Panc1 (cell line): ENCODE measurements at regions of chr1 and their contacts with region 1.

Region 1: DNA sequence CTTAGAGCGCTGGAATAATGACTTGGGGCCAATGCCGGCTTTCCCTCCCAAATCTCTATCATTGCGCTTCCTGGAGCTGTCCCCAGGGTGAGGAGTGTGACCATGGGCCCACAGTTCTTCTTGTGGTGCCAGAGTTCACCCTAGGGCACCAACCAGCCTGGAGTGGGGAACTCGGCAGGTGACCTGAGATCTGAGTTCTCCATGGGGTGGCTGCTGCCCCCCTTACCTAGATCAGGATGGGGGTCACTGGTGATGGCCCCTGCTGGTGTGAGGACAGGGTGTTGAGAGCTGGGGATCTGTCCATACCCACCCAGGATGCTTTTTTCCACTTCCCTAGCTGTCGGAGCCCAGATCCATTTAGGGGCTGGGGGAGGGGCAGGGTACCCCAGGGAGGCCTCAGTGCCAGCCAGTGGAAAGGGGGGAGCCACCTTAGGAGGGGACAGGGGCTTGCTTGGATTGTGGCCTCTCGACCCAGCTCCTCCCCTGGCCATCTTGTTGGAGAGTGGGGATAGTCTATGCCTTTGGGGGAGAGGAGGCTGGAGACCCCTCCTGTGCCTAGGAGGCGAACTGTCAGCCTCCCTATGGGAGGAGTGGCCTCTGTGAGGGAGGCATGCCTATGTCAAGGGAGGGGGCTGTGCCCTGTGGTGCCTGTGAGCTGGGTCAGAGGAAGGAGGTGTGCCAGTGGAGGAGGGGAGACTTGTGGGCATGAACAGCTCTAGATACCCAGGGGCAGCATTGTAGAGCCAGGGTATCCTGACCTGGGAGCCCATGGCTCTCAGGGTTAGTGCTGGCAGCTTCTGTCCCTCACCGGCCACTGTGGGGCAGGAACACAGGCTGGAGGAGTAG is 1.7 kb downstream of the FOXO6 start:
- DNase-seq: no peak
- ATAC-seq: no peak
- H3K4me3 ChIP-seq: no peak overlapping the region; a peak in 1 of 4 replicates
- H3K27ac ChIP-seq: no peak overlapping the region
- H3K4me1 ChIP-seq: peaks cover 9% of the 10 kb centered on the region; the same call in 1 of the 2 replicates
- H3K27me3 ChIP-seq: no peaks in the 10 kb centered on the region
- CTCF ChIP-seq: no peak

Region 2: GRCh38 chr1:41313661-41314131 is 49.3 kb before region 1 on chr1:
- CTCF ChIA-PET with region 1: no interaction called
- POLR2A ChIA-PET with region 1: interaction called, 11 read pairs
- in situ Hi-C with region 1: no loop called
- intact Hi-C with region 1: no loop called
- DNase-seq: no peak
- ATAC-seq: no peak
- H3K4me3 ChIP-seq: no peak overlapping the region
- H3K27ac ChIP-seq: no peak overlapping the region
- H3K4me1 ChIP-seq: no peaks in the 10 kb centered on the region
- H3K27me3 ChIP-seq: no peaks in the 10 kb centered on the region; the same call in 1 of the 2 replicates
- CTCF ChIP-seq: peak; percentile 68

Region 3: DNA sequence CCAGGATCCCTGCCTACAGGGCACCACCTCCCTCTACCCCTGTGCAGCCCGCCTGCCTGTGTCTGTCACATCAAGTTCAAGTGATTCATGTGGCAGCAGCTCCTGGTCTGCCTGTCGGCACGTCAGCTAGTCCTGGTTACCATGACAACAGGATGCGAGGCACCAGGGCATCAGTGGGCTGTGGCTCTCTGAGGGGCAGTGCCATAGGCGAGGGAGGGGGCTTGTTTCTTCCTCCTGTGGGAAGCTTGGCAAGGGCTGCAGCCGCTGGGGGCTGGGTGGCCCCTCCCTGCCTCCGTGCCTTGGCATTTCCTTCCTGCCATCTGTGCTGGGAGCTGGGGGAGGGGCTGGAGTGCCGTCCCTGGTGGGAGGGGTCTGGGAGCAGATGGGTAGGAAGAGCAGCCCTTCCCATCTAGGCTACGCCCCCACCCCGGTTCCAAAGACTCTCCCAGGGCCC is 41.4 kb after region 1 on chr1:
- CTCF ChIA-PET with region 1: no interaction called
- POLR2A ChIA-PET with region 1: no interaction called
- in situ Hi-C with region 1: no loop called
- intact Hi-C with region 1: no loop called
- DNase-seq: no peak
- ATAC-seq: peak; percentile 62; the same call in 1 of the 2 replicates
- H3K4me3 ChIP-seq: no peak overlapping the region
- H3K27ac ChIP-seq: no peak overlapping the region
- H3K4me1 ChIP-seq: no peaks in the 10 kb centered on the region
- H3K27me3 ChIP-seq: peaks cover 2% of the 10 kb centered on the region; the same call in 1 of the 2 replicates
- CTCF ChIP-seq: no peak